Gastrocnemius medialis (tissue), 4 donors: ENCODE measurements at regions of chr14 and their contacts with region 1.

Region 1: DNA sequence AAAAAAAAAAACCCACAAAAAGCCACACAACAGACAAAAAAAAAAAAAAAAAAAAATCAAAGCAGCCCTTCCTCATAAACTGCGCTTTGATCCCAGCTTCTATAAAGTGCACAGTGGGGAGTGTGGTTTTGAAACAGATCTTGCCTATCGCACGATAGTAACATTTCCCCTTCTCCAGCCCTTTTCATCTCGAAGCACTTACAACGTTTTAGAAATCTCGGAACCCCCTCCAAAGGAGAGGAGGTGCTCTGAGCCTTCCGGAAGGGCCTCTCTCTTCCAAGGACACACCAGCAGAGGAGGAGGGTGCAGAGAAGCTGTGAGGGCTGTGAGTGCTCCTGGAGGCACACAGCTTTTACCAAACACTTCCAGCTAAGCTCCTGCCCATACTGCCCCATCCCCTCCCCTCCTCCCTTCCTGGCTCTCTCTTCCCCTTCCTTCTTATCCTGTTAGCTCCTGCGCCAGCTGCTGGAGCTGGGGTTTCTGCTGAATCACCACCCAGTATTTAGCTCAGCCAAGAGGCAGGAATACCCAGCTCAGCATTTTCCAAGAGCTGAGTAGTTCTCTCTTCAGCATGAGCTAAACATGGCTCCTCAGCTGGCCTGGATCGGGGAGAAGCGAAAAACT is 28.4 kb downstream of the SLC7A8 start:
- DNase-seq: peak; percentile 93 to 98
- ATAC-seq: peak; percentile 72 to 75
- H3K4me3 ChIP-seq: peak overlapping the region; percentile 30 to 55 (median 46)
- H3K27ac ChIP-seq: peak overlapping the region; percentile 90 to 97 (median 96)
- H3K4me1 ChIP-seq: peaks cover 45 to 60% of the 10 kb centered on the region in 2 donors
- H3K27me3 ChIP-seq: no peaks in the 10 kb centered on the region
- CTCF ChIP-seq: no peak
- POLR2A ChIP-seq: peak; percentile 70 to 79

Region 2: DNA sequence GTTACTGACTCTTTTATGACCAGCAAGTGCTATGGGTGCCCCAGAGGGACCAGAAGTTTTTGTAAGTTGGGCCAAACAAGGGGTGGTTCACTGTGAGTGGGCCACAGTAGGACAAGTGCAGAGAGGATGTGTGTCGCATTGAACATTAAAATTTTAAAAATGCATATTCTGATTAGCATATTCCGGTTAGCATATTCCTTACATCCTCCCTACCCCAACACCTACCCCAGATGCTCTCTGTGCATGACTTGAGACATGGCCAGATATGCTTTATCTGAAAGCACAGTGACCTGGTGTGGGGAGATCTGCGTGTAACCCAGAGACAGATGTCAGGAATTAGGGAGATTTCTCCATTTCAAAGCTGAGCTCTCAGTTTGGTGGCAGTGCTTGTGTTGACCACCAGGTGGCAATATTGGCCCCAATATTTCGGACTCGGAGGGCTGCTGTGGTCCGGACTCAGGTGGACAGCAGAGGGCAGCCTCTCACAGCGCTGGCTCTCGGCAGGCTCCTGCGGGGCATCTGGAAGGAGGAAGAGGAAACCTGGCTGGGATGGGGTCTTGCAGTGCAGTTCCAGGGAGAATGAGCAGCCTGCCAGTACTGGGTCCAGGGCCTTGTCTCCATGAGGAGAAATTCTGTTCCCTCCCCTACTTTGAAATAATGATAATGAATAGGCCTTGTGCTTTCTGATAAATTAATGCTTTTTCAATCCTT is 34.4 kb before region 1 on chr14:
- in situ Hi-C with region 1: no loop called
- intact Hi-C with region 1: loop called (anchors 1 kb)
- DNase-seq: peak; percentile 81 to 88
- ATAC-seq: peak; percentile 51 to 70
- H3K4me3 ChIP-seq: no peak overlapping the region
- H3K27ac ChIP-seq: peak overlapping the region; percentile 56 to 85 (median 76)
- H3K4me1 ChIP-seq: peaks cover 22 to 29% of the 10 kb centered on the region in 2 donors
- H3K27me3 ChIP-seq: peaks cover 0 to 3% (median 0%) of the 10 kb centered on the region in 3 donors
- CTCF ChIP-seq: peak; percentile 100
- POLR2A ChIP-seq: no peak